ENCODE measurements at regions of chr3 and their contacts with region 1.

Region 1: GRCh38 chr3:179811321-179812095 is 158.7 kb downstream of the USP13 start:
- DNase-seq: peak in 1 of 2 experiments; percentile 21
- H3K4me3 ChIP-seq: no peak overlapping the region
- H3K27ac ChIP-seq: no peak overlapping the region
- H3K4me1 ChIP-seq: no peaks in the 10 kb centered on the region
- H3K27me3 ChIP-seq: no peaks in the 10 kb centered on the region
- CTCF ChIP-seq: peak; percentile 5 to 84 (median 79)
- EP300 ChIP-seq: no peak
- POLR2A ChIP-seq: no peak
- RAD21 ChIP-seq: peak; percentile 98 to 99

Region 2: GRCh38 chr3:179726075-179726699 is 85.3 kb before region 1 on chr3:
- CTCF ChIA-PET with region 1: no interaction called
- POLR2A ChIA-PET with region 1: no interaction called
- DNase-seq: no peak
- H3K4me3 ChIP-seq: no peak overlapping the region
- H3K27ac ChIP-seq: no peak overlapping the region
- H3K4me1 ChIP-seq: no peaks in the 10 kb centered on the region
- H3K27me3 ChIP-seq: no peaks in the 10 kb centered on the region
- CTCF ChIP-seq: no peak
- EP300 ChIP-seq: no peak
- POLR2A ChIP-seq: no peak
- RAD21 ChIP-seq: no peak

Region 3: DNA sequence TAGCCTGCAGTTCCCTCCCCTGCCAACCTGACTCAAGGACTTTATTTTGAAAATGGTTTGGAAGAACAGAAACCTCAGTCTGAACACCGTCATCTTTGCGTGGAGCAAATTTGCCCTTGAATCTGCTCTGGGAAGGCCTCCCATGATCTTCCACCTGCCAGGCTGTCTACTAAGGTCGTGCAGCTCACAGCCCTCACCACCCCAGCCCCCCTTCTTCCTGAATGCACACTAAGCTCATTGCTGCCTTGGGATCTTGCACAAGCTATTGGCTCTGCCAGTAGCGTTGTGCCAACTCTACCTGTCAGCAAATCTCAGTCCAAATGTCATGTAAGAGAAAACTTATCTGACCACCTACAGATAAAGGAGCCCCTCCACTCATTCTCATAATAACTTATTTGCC is 17.2 kb before region 1 on chr3:
- CTCF ChIA-PET with region 1: interaction called, 29 read pairs
- POLR2A ChIA-PET with region 1: interaction called, 3 read pairs
- DNase-seq: no peak
- H3K4me3 ChIP-seq: no peak overlapping the region
- H3K27ac ChIP-seq: no peak overlapping the region
- H3K4me1 ChIP-seq: no peaks in the 10 kb centered on the region
- H3K27me3 ChIP-seq: no peaks in the 10 kb centered on the region
- CTCF ChIP-seq: no peak
- EP300 ChIP-seq: no peak
- POLR2A ChIP-seq: no peak
- RAD21 ChIP-seq: no peak

Region 4: GRCh38 chr3:179825519-179826246 is 14.2 kb after region 1 on chr3:
- CTCF ChIA-PET with region 1: interaction called, 29 read pairs
- POLR2A ChIA-PET with region 1: no interaction called
- DNase-seq: no peak
- H3K4me3 ChIP-seq: no peak overlapping the region
- H3K27ac ChIP-seq: no peak overlapping the region
- H3K4me1 ChIP-seq: peaks cover 0 to 9% (median 5%) of the 10 kb centered on the region in 4 experiments; a peak in 4 of 7 replicates
- H3K27me3 ChIP-seq: no peaks in the 10 kb centered on the region
- CTCF ChIP-seq: no peak
- EP300 ChIP-seq: no peak
- POLR2A ChIP-seq: no peak
- RAD21 ChIP-seq: no peak

Region 5: GRCh38 chr3:179872842-179873241 is 61.3 kb after region 1 on chr3:
- CTCF ChIA-PET with region 1: interaction called, 11 read pairs
- POLR2A ChIA-PET with region 1: no interaction called
- DNase-seq: no peak
- H3K4me3 ChIP-seq: no peak overlapping the region
- H3K27ac ChIP-seq: no peak overlapping the region
- H3K4me1 ChIP-seq: peaks cover 0 to 3% (median 0%) of the 10 kb centered on the region in 4 experiments; a peak in 2 of 7 replicates
- H3K27me3 ChIP-seq: no peaks in the 10 kb centered on the region
- CTCF ChIP-seq: peak; percentile 31 to 56 (median 49)
- EP300 ChIP-seq: no peak
- POLR2A ChIP-seq: no peak
- RAD21 ChIP-seq: peak; percentile 51 to 57

Measured in H1 (cell line).